K562 (cell line): ENCODE measurements at regions of chr6 and their contacts with region 1.

Region 1: GRCh38 chr6:2738373-2738979 is 12.2 kb downstream of the MYLK4 start:
- DNase-seq: peak; percentile 64 to 86 (median 68)
- ATAC-seq: peak; percentile 88
- H3K4me3 ChIP-seq: no peak overlapping the region
- H3K27ac ChIP-seq: no peak overlapping the region
- H3K4me1 ChIP-seq: peaks cover 8 to 31% of the 10 kb centered on the region in 2 experiments; a peak in 4 of 5 replicates
- H3K27me3 ChIP-seq: no peaks in the 10 kb centered on the region
- CTCF ChIP-seq: peak; percentile 91 to 96 (median 91)
- EP300 ChIP-seq: no peak
- POLR2A ChIP-seq: no peak
- RAD21 ChIP-seq: peak; percentile 97 to 98

Region 2: GRCh38 chr6:2749969-2750600 is 11.6 kb after region 1 on chr6:
- CTCF ChIA-PET with region 1: interaction called, 8 read pairs
- POLR2A ChIA-PET with region 1: interaction called, 8 read pairs
- in situ Hi-C with region 1: no loop called
- intact Hi-C with region 1: loop called (anchors 1 kb)
- DNase-seq: peak; percentile 69 to 87 (median 72)
- ATAC-seq: peak; percentile 77
- H3K4me3 ChIP-seq: no peak overlapping the region
- H3K27ac ChIP-seq: no peak overlapping the region
- H3K4me1 ChIP-seq: peaks cover 8 to 32% of the 10 kb centered on the region in 2 experiments
- H3K27me3 ChIP-seq: no peaks in the 10 kb centered on the region
- CTCF ChIP-seq: peak; percentile 79 to 93 (median 90)
- EP300 ChIP-seq: no peak
- POLR2A ChIP-seq: no peak
- RAD21 ChIP-seq: peak; percentile 50 to 72

Region 3: GRCh38 chr6:2791124-2791974 is 52.9 kb after region 1 on chr6:
- CTCF ChIA-PET with region 1: interaction called, 6 read pairs
- POLR2A ChIA-PET with region 1: no interaction called
- in situ Hi-C with region 1: no loop called
- intact Hi-C with region 1: loop called (anchors 5 kb)
- DNase-seq: peak; percentile 74 to 88 (median 81)
- ATAC-seq: peak; percentile 97
- H3K4me3 ChIP-seq: no peak overlapping the region
- H3K27ac ChIP-seq: no peak overlapping the region
- H3K4me1 ChIP-seq: peaks cover 2 to 3% of the 10 kb centered on the region in 2 experiments; a peak in 3 of 5 replicates
- H3K27me3 ChIP-seq: no peaks in the 10 kb centered on the region
- CTCF ChIP-seq: peak; percentile 89 to 98 (median 97)
- EP300 ChIP-seq: no peak
- POLR2A ChIP-seq: no peak
- RAD21 ChIP-seq: peak; percentile 97 to 99

Region 4: GRCh38 chr6:2911171-2911570 is 172.7 kb after region 1 on chr6:
- CTCF ChIA-PET with region 1: no interaction called
- POLR2A ChIA-PET with region 1: no interaction called
- in situ Hi-C with region 1: no loop called
- intact Hi-C with region 1: loop called (anchors 5 kb)
- DNase-seq: no peak
- ATAC-seq: no peak
- H3K4me3 ChIP-seq: no peak overlapping the region
- H3K27ac ChIP-seq: no peak overlapping the region
- H3K4me1 ChIP-seq: peaks cover 5 to 6% of the 10 kb centered on the region in 2 experiments; a peak in 4 of 5 replicates
- H3K27me3 ChIP-seq: no peaks in the 10 kb centered on the region
- CTCF ChIP-seq: no peak
- EP300 ChIP-seq: no peak
- POLR2A ChIP-seq: no peak
- RAD21 ChIP-seq: no peak

Region 5: GRCh38 chr6:3721810-3722626 is 983.5 kb after region 1 on chr6:
- CTCF ChIA-PET with region 1: no interaction called
- POLR2A ChIA-PET with region 1: no interaction called
- in situ Hi-C with region 1: no loop called
- intact Hi-C with region 1: loop called (anchors 10 kb)
- DNase-seq: no peak
- ATAC-seq: no peak
- H3K4me3 ChIP-seq: no peak overlapping the region
- H3K27ac ChIP-seq: no peak overlapping the region
- H3K4me1 ChIP-seq: peaks cover 13 to 34% of the 10 kb centered on the region in 2 experiments; a peak in 4 of 5 replicates
- H3K27me3 ChIP-seq: peaks cover 30 to 53% of the 10 kb centered on the region in 2 experiments; a peak in 4 of 5 replicates
- CTCF ChIP-seq: no peak
- EP300 ChIP-seq: no peak
- POLR2A ChIP-seq: no peak
- RAD21 ChIP-seq: no peak